Heart right ventricle (tissue), 16 donors: ENCODE measurements at regions of chr4 and their contacts with region 1.

Region 1: GRCh38 chr4:165855191-165855590 is 17.8 kb upstream of the TLL1 start:
- DNase-seq: no peak
- ATAC-seq: no peak
- H3K4me3 ChIP-seq: no peak overlapping the region
- H3K27ac ChIP-seq: no peak overlapping the region
- H3K4me1 ChIP-seq: no peaks in the 10 kb centered on the region
- H3K27me3 ChIP-seq: no peaks in the 10 kb centered on the region
- CTCF ChIP-seq: peak in 3 of 9 donors; percentile 8 to 32 (median 27)

Region 2: GRCh38 chr4:165553221-165553810 is 301.9 kb before region 1 on chr4:
- intact Hi-C with region 1: loop called in 1 of 10 experiments (anchors 10 kb)
- DNase-seq: no peak
- ATAC-seq: no peak
- H3K4me3 ChIP-seq: no peak overlapping the region
- H3K27ac ChIP-seq: no peak overlapping the region
- H3K4me1 ChIP-seq: no peaks in the 10 kb centered on the region
- H3K27me3 ChIP-seq: no peaks in the 10 kb centered on the region
- CTCF ChIP-seq: no peak